ENCODE measurements at regions of chr13 and their contacts with region 1.

Region 1: DNA sequence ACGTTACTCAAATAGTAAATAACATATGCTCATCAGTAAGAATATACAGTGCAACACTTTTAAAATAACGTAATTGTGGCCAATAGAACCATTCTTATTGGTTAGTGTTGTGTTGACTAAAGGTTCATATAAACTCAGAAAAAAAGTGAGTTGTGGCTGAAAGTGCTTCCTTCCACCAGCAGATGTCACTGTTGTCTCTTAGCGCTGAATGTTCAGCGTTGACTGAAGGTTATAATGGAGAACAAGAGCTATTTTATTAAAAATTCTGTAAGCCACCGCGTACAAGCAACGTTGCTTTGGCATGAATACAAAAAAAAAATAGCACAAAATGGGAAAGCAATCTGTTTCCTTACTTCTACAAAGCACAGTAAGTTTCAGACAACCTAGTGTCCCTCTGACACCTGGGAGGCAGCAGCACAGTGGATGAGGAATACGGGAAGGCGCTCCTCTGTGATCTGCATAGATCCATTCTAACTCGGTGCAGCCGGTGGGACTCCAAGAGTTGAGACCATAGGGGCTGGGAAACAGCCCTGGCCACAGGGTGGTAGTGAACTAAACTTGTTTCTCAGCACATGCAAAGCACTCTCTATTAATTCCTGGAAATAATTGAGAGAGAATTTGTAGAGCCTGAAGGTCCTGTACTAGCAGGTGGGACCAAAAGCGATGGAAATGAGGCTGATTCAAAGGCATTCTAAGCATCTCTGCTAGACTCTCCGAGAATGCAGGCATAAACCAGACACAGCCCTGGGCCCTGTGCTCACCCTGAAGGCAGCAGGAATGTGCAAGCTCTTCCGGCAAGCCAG is 24.0 kb upstream of the OXGR1 start:
- DNase-seq: peak; percentile 61
- ATAC-seq: peak; percentile 92
- H3K4me3 ChIP-seq: no peak overlapping the region
- H3K27ac ChIP-seq: no peak overlapping the region
- H3K4me1 ChIP-seq: peaks cover 2% of the 10 kb centered on the region; the same call in 1 of the 2 replicates
- H3K27me3 ChIP-seq: peaks cover 22% of the 10 kb centered on the region
- CTCF ChIP-seq: peak; percentile 92
- POLR2A ChIP-seq: no peak
- RAD21 ChIP-seq: peak; percentile 77

Region 2: GRCh38 chr13:97221989-97222700 is 203.9 kb after region 1 on chr13 and contains the start of gene MBNL2:
- CTCF ChIA-PET with region 1: no interaction called
- POLR2A ChIA-PET with region 1: interaction called, 4 read pairs
- dilution Hi-C with region 1: no loop called
- in situ Hi-C with region 1: no loop called
- intact Hi-C with region 1: loop called (anchors 5 kb)
- DNase-seq: peak; percentile 94
- ATAC-seq: peak; percentile 97
- H3K4me3 ChIP-seq: peak within 1 kb of the TSS; percentile 90
- H3K27ac ChIP-seq: peak within 1 kb of the TSS; percentile 95
- H3K4me1 ChIP-seq: peaks cover 11% of the 10 kb centered on the region
- H3K27me3 ChIP-seq: no peaks in the 10 kb centered on the region
- CTCF ChIP-seq: no peak
- POLR2A ChIP-seq: peak; percentile 88
- RAD21 ChIP-seq: no peak
- total RNA-seq, gene MBNL2: 103 and 126 TPM in 2 replicates

Region 3: GRCh38 chr13:97359181-97360057 is 341.2 kb after region 1 on chr13:
- CTCF ChIA-PET with region 1: no interaction called
- POLR2A ChIA-PET with region 1: no interaction called
- dilution Hi-C with region 1: no loop called
- in situ Hi-C with region 1: no loop called
- intact Hi-C with region 1: loop called (anchors 1 kb)
- DNase-seq: peak; percentile 92
- ATAC-seq: peak; percentile 95
- H3K4me3 ChIP-seq: no peak overlapping the region
- H3K27ac ChIP-seq: no peak overlapping the region
- H3K4me1 ChIP-seq: peaks cover 3% of the 10 kb centered on the region; the same call in 1 of the 2 replicates
- H3K27me3 ChIP-seq: no peaks in the 10 kb centered on the region
- CTCF ChIP-seq: peak; percentile 81
- POLR2A ChIP-seq: 0 out of 2 replicates have a peak, but pooled peaks have one; percentile 37
- RAD21 ChIP-seq: peak; percentile 91

Region 4: GRCh38 chr13:97659602-97660001 is 641.4 kb after region 1 on chr13:
- CTCF ChIA-PET with region 1: no interaction called
- POLR2A ChIA-PET with region 1: no interaction called
- dilution Hi-C with region 1: no loop called
- in situ Hi-C with region 1: no loop called
- intact Hi-C with region 1: loop called (anchors 5 kb)
- DNase-seq: peak; percentile 21
- ATAC-seq: peak; percentile 71
- H3K4me3 ChIP-seq: no peak overlapping the region
- H3K27ac ChIP-seq: no peak overlapping the region
- H3K4me1 ChIP-seq: no peaks in the 10 kb centered on the region
- H3K27me3 ChIP-seq: peaks cover 20% of the 10 kb centered on the region
- CTCF ChIP-seq: peak; percentile 41
- POLR2A ChIP-seq: no peak
- RAD21 ChIP-seq: peak; percentile 52

Region 5: DNA sequence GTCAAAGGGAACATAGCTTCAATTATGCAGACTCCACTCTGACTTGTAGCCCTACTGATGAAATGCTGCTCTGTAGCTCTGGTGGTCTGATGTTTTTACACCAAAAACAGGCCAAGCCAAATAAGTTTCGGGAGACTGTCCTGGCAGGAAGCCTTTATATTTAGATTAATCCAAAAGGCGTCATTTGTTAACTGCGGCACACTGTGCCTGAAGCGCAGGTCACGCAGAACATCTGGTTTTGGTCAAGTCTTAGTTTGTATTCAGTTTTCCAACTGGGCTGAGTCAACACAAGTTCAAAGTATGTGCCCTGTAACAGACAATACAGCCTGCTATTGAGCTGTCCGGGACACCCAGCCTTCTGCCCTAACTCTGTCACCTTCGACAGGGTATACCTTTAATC is 780.6 kb after region 1 on chr13:
- CTCF ChIA-PET with region 1: no interaction called
- POLR2A ChIA-PET with region 1: no interaction called
- dilution Hi-C with region 1: no loop called
- in situ Hi-C with region 1: loop called (anchors 10 kb)
- intact Hi-C with region 1: loop called (anchors 1 kb)
- DNase-seq: peak; percentile 15
- ATAC-seq: peak; percentile 59
- H3K4me3 ChIP-seq: no peak overlapping the region
- H3K27ac ChIP-seq: no peak overlapping the region
- H3K4me1 ChIP-seq: peaks cover 2% of the 10 kb centered on the region; the same call in 1 of the 2 replicates
- H3K27me3 ChIP-seq: peaks cover 9% of the 10 kb centered on the region
- CTCF ChIP-seq: no peak
- POLR2A ChIP-seq: no peak
- RAD21 ChIP-seq: no peak

Region 6: DNA sequence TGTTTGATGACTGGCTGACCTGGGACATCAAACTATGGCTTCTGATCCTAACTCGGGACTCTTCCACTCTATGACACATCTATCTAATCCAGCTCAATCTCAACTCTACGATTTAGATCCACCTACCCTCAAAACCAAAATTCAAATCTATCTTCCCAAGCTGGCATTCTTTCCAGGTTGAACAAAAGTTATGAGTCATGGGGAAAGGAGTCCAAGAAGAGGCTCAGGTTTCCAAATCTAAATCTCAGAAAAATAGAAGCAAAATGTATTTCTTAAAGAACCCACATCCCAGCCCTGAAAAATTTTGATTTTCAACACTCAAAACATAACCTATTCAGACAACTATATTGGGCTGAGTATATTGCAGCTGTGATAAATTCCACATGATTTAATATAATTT is 791.3 kb after region 1 on chr13:
- CTCF ChIA-PET with region 1: no interaction called
- POLR2A ChIA-PET with region 1: no interaction called
- dilution Hi-C with region 1: no loop called
- in situ Hi-C with region 1: loop called (anchors 10 kb)
- intact Hi-C with region 1: no loop called
- DNase-seq: peak; percentile 6
- ATAC-seq: no peak
- H3K4me3 ChIP-seq: no peak overlapping the region
- H3K27ac ChIP-seq: no peak overlapping the region
- H3K4me1 ChIP-seq: no peaks in the 10 kb centered on the region
- H3K27me3 ChIP-seq: peaks cover 8% of the 10 kb centered on the region
- CTCF ChIP-seq: no peak
- POLR2A ChIP-seq: no peak
- RAD21 ChIP-seq: no peak

Measured in IMR-90 (cell line).